ENCODE measurements at regions of chr4 and their contacts with region 1.

Region 1: GRCh38 chr4:39134683-39135319 is 47.5 kb upstream of the WDR19 start:
- DNase-seq: no peak
- H3K4me3 Mint-ChIP-seq: no peak overlapping the region
- H3K27ac Mint-ChIP-seq: no peak overlapping the region
- H3K4me1 Mint-ChIP-seq: peaks cover 10% of the 10 kb centered on the region
- H3K27me3 Mint-ChIP-seq: no peaks in the 10 kb centered on the region

Region 2: DNA sequence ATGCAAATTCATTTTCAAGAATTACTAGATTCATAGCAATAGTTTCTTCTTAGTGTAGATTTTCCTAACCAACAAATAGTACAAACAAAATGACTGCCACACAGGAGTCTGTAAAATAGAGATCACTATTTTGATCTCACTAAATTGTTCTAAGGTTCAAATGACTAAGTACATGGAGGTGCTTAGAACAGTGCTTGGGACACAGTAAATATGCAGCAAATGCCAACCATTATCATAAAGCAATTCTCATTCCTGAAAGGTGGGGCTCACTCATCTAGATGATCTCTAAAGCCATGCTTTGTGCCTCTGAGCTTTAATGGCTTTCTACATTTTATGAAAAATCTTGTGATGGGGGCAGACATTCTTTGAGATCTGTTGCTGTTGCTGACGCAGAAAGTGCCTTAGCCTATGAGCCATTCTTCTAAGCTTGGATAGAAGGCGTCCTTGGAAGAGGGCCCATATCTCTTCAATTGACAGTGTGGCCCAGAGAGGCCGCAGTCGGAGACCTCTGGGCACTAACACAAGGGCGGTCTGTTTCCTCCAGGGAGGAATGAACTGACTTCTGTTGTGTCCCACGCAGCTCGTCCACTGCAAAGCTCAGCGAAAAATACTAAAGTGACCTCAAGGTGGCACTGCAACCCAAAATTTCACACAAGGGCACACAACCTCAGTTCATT is 375.6 kb before region 1 on chr4:
- CTCF ChIA-PET with region 1: interaction called, 26 read pairs
- intact Hi-C with region 1: loop called (anchors 1 kb)
- DNase-seq: peak; percentile 82
- H3K4me3 Mint-ChIP-seq: no peak overlapping the region
- H3K27ac Mint-ChIP-seq: no peak overlapping the region
- H3K4me1 Mint-ChIP-seq: peaks cover 18% of the 10 kb centered on the region
- H3K27me3 Mint-ChIP-seq: no peaks in the 10 kb centered on the region

Region 3: DNA sequence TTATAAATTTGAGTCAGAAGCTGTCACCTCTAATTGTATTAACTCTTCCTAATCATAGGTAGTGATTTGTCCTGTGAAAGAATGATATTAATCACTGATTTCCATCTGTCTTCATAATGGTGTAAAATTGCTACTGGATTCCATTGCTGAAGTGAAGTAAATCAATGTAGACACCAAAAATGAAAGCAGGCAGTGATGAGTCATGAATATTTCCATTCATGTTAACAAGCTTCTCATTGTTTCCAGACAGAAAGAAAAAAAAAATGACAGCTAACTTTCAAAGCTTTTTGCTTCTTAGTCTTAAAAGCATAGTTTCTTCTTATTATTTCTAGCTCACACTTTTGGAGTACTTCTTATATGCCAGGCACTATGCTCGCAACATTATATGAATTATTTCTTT is 245.7 kb before region 1 on chr4:
- CTCF ChIA-PET with region 1: interaction called, 11 read pairs
- intact Hi-C with region 1: loop called (anchors 1 kb)
- DNase-seq: no peak
- H3K4me3 Mint-ChIP-seq: peak overlapping the region; percentile 46
- H3K27ac Mint-ChIP-seq: peak overlapping the region; percentile 88
- H3K4me1 Mint-ChIP-seq: peaks cover 23% of the 10 kb centered on the region
- H3K27me3 Mint-ChIP-seq: no peaks in the 10 kb centered on the region

Region 4: DNA sequence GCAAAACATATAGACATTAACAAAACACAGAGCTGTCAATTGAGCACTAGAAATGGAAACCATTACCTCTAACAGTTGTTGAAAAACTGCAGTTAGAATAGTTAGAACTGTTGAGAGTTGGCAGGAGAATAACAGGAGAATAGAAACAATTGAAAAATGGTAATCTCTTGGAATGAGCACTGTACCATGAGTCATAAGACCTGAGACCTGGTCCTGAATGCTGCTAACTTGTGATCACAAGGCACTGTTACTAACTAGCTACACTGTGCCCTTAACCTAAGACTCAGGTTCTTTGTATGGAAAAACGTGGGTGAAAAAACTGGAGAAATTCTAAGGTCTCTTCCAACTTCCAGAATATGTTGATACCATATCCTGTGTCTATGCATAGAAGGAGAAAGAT is 237.9 kb before region 1 on chr4:
- CTCF ChIA-PET with region 1: interaction called, 162 read pairs
- intact Hi-C with region 1: loop called (anchors 1 kb)
- DNase-seq: no peak
- H3K4me3 Mint-ChIP-seq: no peak overlapping the region
- H3K27ac Mint-ChIP-seq: no peak overlapping the region
- H3K4me1 Mint-ChIP-seq: peaks cover 19% of the 10 kb centered on the region
- H3K27me3 Mint-ChIP-seq: peaks cover 12% of the 10 kb centered on the region

Region 5: DNA sequence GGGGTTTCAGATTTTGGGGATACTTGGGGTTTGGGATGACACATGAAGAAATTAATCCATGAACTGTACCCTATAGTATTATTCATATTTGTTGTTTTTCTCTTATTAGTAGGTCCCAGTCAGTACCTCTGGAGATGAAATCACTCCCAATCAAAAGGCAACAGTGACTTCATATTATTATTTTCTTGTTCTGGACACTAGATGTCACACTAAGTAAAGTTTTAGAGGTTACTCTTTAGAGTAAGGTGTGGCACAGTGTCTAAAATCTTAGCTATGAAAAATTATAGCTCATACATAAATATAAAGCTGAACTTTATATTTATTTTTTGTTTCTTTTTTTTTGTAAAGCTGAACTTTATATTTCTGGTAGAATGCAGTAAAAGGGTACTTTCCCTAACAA is 232.1 kb before region 1 on chr4:
- CTCF ChIA-PET with region 1: interaction called, 162 read pairs
- intact Hi-C with region 1: loop called (anchors 1 kb)
- DNase-seq: no peak
- H3K4me3 Mint-ChIP-seq: no peak overlapping the region
- H3K27ac Mint-ChIP-seq: no peak overlapping the region
- H3K4me1 Mint-ChIP-seq: peaks cover 5% of the 10 kb centered on the region
- H3K27me3 Mint-ChIP-seq: peaks cover 3% of the 10 kb centered on the region

Region 6: GRCh38 chr4:39044364-39044955 is 90.3 kb before region 1 on chr4:
- CTCF ChIA-PET with region 1: interaction called, 12 read pairs
- intact Hi-C with region 1: loop called (anchors 1 kb)
- DNase-seq: peak; percentile 99
- H3K4me3 Mint-ChIP-seq: peak overlapping the region; percentile 83
- H3K27ac Mint-ChIP-seq: peak overlapping the region; percentile 92
- H3K4me1 Mint-ChIP-seq: peaks cover 51% of the 10 kb centered on the region
- H3K27me3 Mint-ChIP-seq: no peaks in the 10 kb centered on the region

Measured in activated naive CD4-positive, alpha-beta T cell treated with anti-CD3 and anti-CD28 coated beads for 36 hours (primary cell).